PC-3 (cell line): ENCODE measurements at regions of chr6 and their contacts with region 1.

Region 1: GRCh38 chr6:12313992-12314805 is 24.0 kb downstream of the EDN1 start:
- DNase-seq: peak; percentile 96
- ATAC-seq: peak; percentile 78
- H3K4me3 ChIP-seq: no peak overlapping the region
- H3K27ac ChIP-seq: peak overlapping the region; percentile 80
- H3K4me1 ChIP-seq: peaks cover 21% of the 10 kb centered on the region
- H3K27me3 ChIP-seq: no peaks in the 10 kb centered on the region
- CTCF ChIP-seq: no peak

Region 2: DNA sequence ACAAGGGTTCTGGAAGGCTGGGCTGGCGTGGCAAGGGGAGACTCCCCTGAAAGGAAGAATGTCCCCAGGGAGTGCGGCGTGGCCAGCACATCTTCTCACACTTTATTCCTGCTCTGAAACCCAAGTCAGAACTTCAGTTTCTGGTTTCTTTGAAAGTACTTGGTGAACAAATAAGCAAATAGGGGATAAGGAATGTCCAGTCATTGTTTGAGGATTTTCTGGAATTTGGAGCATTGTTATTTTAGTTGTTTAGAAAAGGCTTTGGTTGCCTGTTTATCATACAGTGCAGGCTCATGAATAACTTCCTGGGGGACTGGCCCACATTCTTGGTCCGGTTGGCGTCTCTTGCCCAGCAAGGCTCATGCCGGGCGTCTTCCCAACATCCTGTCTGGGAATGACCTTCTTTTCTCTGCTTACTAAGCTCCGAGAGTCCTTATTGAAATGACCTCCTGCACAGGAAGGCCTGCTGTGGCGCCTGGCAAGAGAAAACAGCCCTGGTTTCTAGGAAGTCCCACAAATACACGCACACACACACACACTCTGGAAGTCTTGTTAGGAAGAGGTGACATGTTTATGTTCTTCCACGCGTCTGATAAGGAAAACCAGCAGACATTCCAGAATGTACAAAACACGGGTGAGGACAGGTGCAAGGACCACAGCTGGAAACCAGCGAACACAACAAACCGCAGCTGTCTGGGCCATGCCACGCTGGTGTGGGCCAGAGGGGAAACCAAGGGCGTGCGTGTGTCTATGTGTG is 704.7 kb before region 1 on chr6:
- CTCF ChIA-PET with region 1: no interaction called
- POLR2A ChIA-PET with region 1: no interaction called
- intact Hi-C with region 1: no loop called
- DNase-seq: peak; percentile 82
- ATAC-seq: peak; percentile 88
- H3K4me3 ChIP-seq: no peak overlapping the region
- H3K27ac ChIP-seq: peak overlapping the region; percentile 36
- H3K4me1 ChIP-seq: peaks cover 34% of the 10 kb centered on the region
- H3K27me3 ChIP-seq: no peaks in the 10 kb centered on the region
- CTCF ChIP-seq: no peak

Region 3: DNA sequence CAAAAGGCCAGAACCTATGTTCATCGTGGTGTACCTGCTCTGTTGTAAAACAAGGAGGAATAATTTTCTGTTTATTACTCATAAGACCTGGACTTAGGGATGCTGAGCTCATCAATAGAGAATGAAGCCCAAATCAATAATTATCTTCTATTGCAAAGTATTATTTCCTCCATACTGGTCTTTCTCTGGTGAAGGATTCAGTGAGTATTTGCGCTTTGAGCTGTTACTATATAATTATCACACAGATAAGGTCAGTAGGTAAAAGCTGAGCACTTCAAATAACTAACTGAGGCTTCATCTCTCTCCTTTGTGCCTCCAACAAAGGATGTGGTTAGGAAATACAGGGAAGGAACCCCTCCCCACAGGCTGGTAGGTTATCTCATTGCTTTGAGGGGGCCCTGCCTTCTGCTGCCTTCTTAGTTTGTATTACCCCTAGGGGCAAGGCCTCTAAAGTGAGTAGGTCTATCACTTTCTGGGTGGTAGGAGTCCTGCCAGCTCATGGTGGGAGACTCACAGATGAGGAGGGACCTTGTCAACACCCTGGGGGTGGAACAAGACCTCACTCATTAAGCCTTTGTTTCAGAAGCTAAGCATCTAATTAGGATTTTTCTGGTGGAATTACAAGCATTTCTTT is 10.4 kb after region 1 on chr6:
- CTCF ChIA-PET with region 1: interaction called, 3 read pairs
- POLR2A ChIA-PET with region 1: interaction called, 12 read pairs
- intact Hi-C with region 1: loop called (anchors 1 kb)
- DNase-seq: peak; percentile 37
- ATAC-seq: peak; percentile 10
- H3K4me3 ChIP-seq: peak overlapping the region; percentile 14
- H3K27ac ChIP-seq: peak overlapping the region; percentile 97
- H3K4me1 ChIP-seq: peaks cover 48% of the 10 kb centered on the region
- H3K27me3 ChIP-seq: no peaks in the 10 kb centered on the region
- CTCF ChIP-seq: no peak

Region 4: GRCh38 chr6:12348530-12349511 is 34.6 kb after region 1 on chr6:
- CTCF ChIA-PET with region 1: interaction called, 4 read pairs
- POLR2A ChIA-PET with region 1: no interaction called
- intact Hi-C with region 1: loop called (anchors 5 kb)
- DNase-seq: peak; percentile 96
- ATAC-seq: peak; percentile 97
- H3K4me3 ChIP-seq: peak overlapping the region; percentile 10; the same call in 1 of the 2 replicates
- H3K27ac ChIP-seq: peak overlapping the region; percentile 85
- H3K4me1 ChIP-seq: peaks cover 38% of the 10 kb centered on the region
- H3K27me3 ChIP-seq: no peaks in the 10 kb centered on the region
- CTCF ChIP-seq: no peak

Region 5: DNA sequence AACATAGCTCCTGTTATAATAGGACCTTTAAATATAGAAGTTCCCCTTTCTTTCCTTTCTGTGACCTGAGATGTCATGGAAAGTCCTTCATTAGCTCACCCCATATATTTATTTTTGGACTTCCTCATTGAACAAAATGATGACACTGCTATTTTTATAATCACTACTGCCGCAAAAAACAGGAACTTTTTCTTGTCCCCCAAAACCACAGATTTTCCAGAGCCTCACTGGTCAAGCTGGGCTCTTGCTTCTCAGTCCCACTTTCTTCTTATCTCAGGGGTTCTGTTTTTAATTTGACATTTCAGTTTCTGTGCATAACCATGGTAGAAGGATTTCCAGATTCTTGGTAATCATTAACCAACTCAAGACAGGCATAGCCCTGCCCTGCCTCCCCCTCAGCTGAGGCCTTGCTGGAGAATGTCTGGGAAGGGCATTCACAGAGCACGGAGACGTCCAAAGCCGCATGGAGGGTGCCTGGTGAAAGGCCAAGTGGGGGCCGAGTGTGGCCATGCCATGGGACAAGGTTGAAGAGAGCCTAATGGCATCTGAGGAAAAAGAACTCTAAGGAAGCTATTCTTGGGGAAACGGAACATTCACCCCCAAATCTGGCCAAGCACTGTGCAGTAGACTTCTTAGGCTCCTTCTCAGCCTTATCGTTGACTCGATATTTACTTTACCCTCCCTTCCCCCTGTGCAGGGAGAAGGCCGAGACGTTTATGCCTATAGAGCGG is 49.6 kb after region 1 on chr6:
- CTCF ChIA-PET with region 1: no interaction called
- POLR2A ChIA-PET with region 1: interaction called, 12 read pairs
- intact Hi-C with region 1: no loop called
- DNase-seq: no peak
- ATAC-seq: no peak
- H3K4me3 ChIP-seq: no peak overlapping the region
- H3K27ac ChIP-seq: no peak overlapping the region
- H3K4me1 ChIP-seq: no peaks in the 10 kb centered on the region
- H3K27me3 ChIP-seq: no peaks in the 10 kb centered on the region
- CTCF ChIP-seq: no peak

Region 6: GRCh38 chr6:12886961-12887775 is 573.0 kb after region 1 on chr6:
- CTCF ChIA-PET with region 1: no interaction called
- POLR2A ChIA-PET with region 1: no interaction called
- intact Hi-C with region 1: no loop called
- DNase-seq: peak; percentile 11
- ATAC-seq: no peak
- H3K4me3 ChIP-seq: no peak overlapping the region
- H3K27ac ChIP-seq: no peak overlapping the region
- H3K4me1 ChIP-seq: no peaks in the 10 kb centered on the region
- H3K27me3 ChIP-seq: peaks cover 45% of the 10 kb centered on the region
- CTCF ChIP-seq: no peak